ENCODE measurements at regions of chr6 and their contacts with region 1.

Region 1: DNA sequence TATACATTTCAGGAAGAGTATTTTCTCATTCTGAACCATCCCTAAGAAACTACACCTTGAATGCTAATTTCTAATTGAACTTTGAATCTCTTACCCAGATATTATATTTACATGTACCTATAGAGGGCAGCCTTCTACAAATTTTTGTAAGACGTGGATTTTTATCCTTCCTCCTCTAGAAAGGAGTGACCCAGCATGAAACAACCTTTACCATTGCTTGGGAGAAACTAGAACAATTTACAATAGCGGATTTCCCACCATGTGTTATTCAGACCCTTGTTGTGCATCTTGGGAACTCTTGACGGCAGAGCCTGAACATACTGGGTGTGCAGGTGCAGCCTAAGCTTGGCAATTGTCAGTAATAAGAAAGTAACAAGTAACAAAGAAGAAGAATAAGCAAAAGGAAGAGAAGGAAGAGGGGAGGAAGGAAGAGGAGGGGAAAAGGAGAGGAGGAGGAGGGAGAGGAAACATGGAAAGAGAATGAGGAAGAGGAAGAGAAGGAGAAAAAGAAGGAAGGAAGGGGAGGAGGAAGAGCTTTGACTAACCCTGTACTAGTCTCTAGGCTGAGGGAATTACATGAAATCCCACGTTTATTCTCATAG is 10.8 kb upstream of the TAAR1 start:
- DNase-seq: peak; percentile 56
- H3K4me3 ChIP-seq: no peak overlapping the region
- H3K27ac ChIP-seq: no peak overlapping the region
- H3K4me1 ChIP-seq: peaks cover 2% of the 10 kb centered on the region
- H3K27me3 ChIP-seq: no peaks in the 10 kb centered on the region
- CTCF ChIP-seq: peak in 1 of 2 donors; percentile 18
- POLR2A ChIP-seq: no peak

Region 2: GRCh38 chr6:132715204-132715603 is 45.4 kb after region 1 on chr6:
- CTCF ChIA-PET with region 1: interaction called, 49 read pairs
- POLR2A ChIA-PET with region 1: no interaction called
- dilution Hi-C with region 1: no loop called
- intact Hi-C with region 1: loop called (anchors 1 kb)
- DNase-seq: peak; percentile 32
- H3K4me3 ChIP-seq: no peak overlapping the region
- H3K27ac ChIP-seq: no peak overlapping the region
- H3K4me1 ChIP-seq: no peaks in the 10 kb centered on the region
- H3K27me3 ChIP-seq: no peaks in the 10 kb centered on the region
- CTCF ChIP-seq: peak in 1 of 2 donors; percentile 18
- POLR2A ChIP-seq: no peak

Region 3: GRCh38 chr6:132768051-132768517 is 98.3 kb after region 1 on chr6:
- CTCF ChIA-PET with region 1: interaction called, 21 read pairs
- POLR2A ChIA-PET with region 1: no interaction called
- dilution Hi-C with region 1: no loop called
- intact Hi-C with region 1: loop called (anchors 1 kb)
- DNase-seq: peak; percentile 32
- H3K4me3 ChIP-seq: no peak overlapping the region
- H3K27ac ChIP-seq: no peak overlapping the region
- H3K4me1 ChIP-seq: no peaks in the 10 kb centered on the region
- H3K27me3 ChIP-seq: peaks cover 0 to 3% of the 10 kb centered on the region in 2 experiments
- CTCF ChIP-seq: peak; percentile 16 to 21
- POLR2A ChIP-seq: no peak

Region 4: GRCh38 chr6:132780770-132781371 is 111.1 kb after region 1 on chr6:
- CTCF ChIA-PET with region 1: interaction called, 14 read pairs
- POLR2A ChIA-PET with region 1: no interaction called
- dilution Hi-C with region 1: no loop called
- intact Hi-C with region 1: no loop called
- DNase-seq: no peak
- H3K4me3 ChIP-seq: no peak overlapping the region
- H3K27ac ChIP-seq: no peak overlapping the region
- H3K4me1 ChIP-seq: no peaks in the 10 kb centered on the region
- H3K27me3 ChIP-seq: no peaks in the 10 kb centered on the region
- CTCF ChIP-seq: peak in 1 of 2 donors; percentile 11
- POLR2A ChIP-seq: no peak

Region 5: DNA sequence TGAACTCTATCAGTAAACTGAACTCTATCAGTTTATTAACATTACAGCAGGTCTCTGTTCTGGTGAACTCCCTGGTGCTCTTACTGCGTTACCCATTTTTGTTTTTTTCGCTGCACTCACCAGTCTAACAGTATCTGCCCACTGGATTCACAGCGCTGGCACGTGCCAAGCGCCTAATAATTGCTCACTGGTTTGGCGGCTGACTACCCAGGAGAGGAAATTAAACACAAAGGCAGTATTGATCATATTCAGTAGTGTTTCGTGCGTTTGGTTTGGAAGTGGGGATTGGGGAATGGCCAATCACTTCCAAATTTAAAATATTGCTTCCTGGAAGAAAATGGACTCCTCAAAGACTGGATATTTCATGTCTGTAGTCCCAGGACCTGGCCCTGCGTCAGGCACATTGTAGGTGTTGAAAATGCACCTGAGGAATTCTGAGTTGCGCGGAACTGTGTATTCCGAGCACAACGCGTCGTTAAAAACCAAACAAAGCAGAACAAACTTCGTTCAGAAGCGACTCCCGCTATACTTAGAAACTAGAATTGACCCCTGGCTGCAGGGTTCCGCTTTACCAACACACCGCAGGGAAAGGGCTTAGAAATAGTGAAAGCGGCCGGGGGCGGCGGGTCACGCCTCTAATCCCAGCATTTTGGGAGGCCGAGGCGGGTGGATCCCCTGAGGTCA is 143.5 kb after region 1 on chr6:
- CTCF ChIA-PET with region 1: interaction called, 10 read pairs
- POLR2A ChIA-PET with region 1: interaction called, 5 read pairs
- dilution Hi-C with region 1: no loop called
- intact Hi-C with region 1: loop called (anchors 5 kb)
- DNase-seq: peak; percentile 75
- H3K4me3 ChIP-seq: peak overlapping the region; percentile 47 to 80 (median 55)
- H3K27ac ChIP-seq: peak overlapping the region; percentile 63
- H3K4me1 ChIP-seq: peaks cover 24% of the 10 kb centered on the region
- H3K27me3 ChIP-seq: peaks cover 4 to 5% of the 10 kb centered on the region in 2 experiments
- CTCF ChIP-seq: no peak
- POLR2A ChIP-seq: peak; percentile 38

Region 6: DNA sequence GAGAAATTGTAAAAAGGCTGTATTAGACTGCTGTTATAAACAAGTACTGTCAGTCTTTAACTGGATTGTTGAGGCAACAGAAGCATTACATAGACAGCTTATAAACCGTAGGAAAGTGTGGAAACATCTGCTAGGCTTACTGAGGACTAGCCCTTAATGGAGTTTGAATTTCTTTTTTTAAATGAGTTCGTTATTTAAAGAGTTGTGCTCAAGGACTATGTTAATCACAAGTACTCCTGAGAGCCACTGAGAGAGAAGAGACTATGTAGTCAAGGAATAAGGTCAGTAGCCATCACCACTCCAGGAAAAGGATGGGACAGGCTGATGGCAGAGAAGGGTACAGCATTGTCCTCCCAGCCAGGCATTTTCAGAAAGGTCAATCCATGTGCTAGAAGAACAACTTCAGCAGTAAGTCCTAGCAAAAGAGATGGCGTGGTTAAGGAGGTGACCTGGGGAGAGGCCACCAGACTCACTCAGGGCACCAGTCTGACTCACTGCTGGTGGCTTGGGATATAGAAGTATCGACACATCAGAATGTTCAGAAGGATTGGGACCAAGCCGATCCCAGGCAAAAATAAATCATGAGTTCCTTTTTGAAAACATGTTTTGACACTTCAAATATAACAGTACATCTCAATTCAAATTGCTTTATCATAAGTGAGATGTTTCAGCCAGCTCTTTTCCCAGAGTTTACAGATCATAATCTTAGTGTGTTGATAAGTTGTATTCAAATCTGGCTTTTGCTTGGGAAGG is 151.0 kb after region 1 on chr6:
- CTCF ChIA-PET with region 1: interaction called, 12 read pairs
- POLR2A ChIA-PET with region 1: no interaction called
- dilution Hi-C with region 1: no loop called
- intact Hi-C with region 1: no loop called
- DNase-seq: peak; percentile 29
- H3K4me3 ChIP-seq: no peak overlapping the region
- H3K27ac ChIP-seq: no peak overlapping the region
- H3K4me1 ChIP-seq: peaks cover 9% of the 10 kb centered on the region
- H3K27me3 ChIP-seq: no peaks in the 10 kb centered on the region
- CTCF ChIP-seq: no peak
- POLR2A ChIP-seq: peak; percentile 63

Region 7: GRCh38 chr6:133040094-133040802 is 370.5 kb after region 1 on chr6:
- CTCF ChIA-PET with region 1: interaction called, 4 read pairs
- POLR2A ChIA-PET with region 1: no interaction called
- dilution Hi-C with region 1: no loop called
- intact Hi-C with region 1: loop called (anchors 5 kb)
- DNase-seq: peak; percentile 53
- H3K4me3 ChIP-seq: no peak overlapping the region
- H3K27ac ChIP-seq: no peak overlapping the region
- H3K4me1 ChIP-seq: no peaks in the 10 kb centered on the region
- H3K27me3 ChIP-seq: no peaks in the 10 kb centered on the region
- CTCF ChIP-seq: peak in 1 of 2 donors; percentile 35
- POLR2A ChIP-seq: no peak

Measured in endothelial cell of umbilical vein (primary cell).